ENCODE measurements at regions of chr19 and their contacts with region 1.

Region 1: GRCh38 chr19:35114353-35115176 is 1.1 kb upstream of the FXYD3 start:
- DNase-seq: peak; percentile 68 to 82
- H3K4me3 ChIP-seq: peak overlapping the region; percentile 13 to 50
- H3K27ac ChIP-seq: peak overlapping the region; percentile 29 to 55
- H3K4me1 ChIP-seq: peaks cover 0 to 15% (median 10%) of the 10 kb centered on the region in 4 donors
- H3K27me3 ChIP-seq: peaks cover 0 to 4% of the 10 kb centered on the region in 2 donors
- CTCF ChIP-seq: peak; percentile 96 to 99

Region 2: DNA sequence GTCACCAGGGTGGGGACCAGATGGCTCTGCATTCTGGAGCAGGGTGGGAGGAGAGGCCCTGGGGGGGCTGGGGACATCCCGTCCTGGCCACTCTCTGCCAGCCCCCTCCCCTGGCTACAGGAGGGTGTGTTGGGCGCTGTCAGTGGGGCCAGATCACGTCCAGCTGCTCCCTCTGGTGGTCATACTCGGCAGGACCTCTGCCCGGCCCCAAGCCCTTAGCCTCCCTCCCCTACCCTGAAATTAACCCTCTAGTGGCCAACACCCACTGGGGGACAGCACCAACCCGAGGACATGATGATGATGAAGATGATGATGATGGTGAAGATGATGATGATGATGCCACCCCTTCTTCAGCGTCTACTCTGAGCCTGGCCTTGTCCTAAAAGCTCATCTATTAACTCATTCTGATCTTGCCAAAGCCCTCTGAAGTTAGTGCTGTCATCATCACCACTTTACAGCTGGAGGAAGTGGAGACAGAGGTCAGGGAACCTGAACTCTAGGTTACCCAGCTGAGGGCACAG is 20.9 kb after region 1 on chr19:
- intact Hi-C with region 1: loop called (anchors 2 kb)
- DNase-seq: peak; percentile 78 to 90
- H3K4me3 ChIP-seq: peak overlapping the region; percentile 44 to 62
- H3K27ac ChIP-seq: peak overlapping the region; percentile 90 to 91
- H3K4me1 ChIP-seq: peaks cover 0 to 54% (median 40%) of the 10 kb centered on the region in 4 donors
- H3K27me3 ChIP-seq: no peaks in the 10 kb centered on the region
- CTCF ChIP-seq: peak; percentile 92 to 95

Measured in tibial artery (tissue), 4 donors.